Activated CD4-positive, alpha-beta T cell treated with anti-CD3 and anti-CD28 coated beads, Interleukin-2, amount 10 ng/mL, durations not matched to agents 24 days and 14 days (primary cell): ENCODE measurements at regions of chr5 and their contacts with region 1.

Region 1: GRCh38 chr5:160439205-160439600 is 17.5 kb downstream of the PTTG1 start:
- DNase-seq: peak; percentile 97
- H3K4me3 Mint-ChIP-seq: peak overlapping the region; percentile 92
- H3K27ac Mint-ChIP-seq: peak overlapping the region; percentile 99
- H3K4me1 Mint-ChIP-seq: peaks cover 61% of the 10 kb centered on the region
- H3K27me3 Mint-ChIP-seq: no peaks in the 10 kb centered on the region

Region 2: DNA sequence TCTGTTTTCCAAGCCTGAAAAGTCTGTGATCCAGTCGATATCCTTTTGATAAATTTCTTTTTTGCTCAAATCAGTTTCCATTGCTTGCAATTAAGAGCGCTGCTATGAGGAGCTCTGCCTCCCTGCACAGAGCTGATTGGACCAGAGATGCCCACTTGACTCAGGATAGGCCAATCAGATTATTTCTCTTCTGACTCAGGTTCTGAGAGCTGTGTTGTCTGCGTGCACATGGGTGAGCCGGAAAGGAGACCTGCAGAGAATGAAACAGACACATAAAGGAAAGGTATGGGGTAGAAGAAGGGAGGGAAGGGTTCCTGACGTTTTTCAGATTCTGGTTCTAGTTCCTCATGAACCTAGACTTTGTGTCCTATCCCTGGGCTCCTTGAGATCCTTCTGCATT is 225.7 kb before region 1 on chr5:
- intact Hi-C with region 1: no loop called
- DNase-seq: no peak
- H3K4me3 Mint-ChIP-seq: no peak overlapping the region
- H3K27ac Mint-ChIP-seq: no peak overlapping the region
- H3K4me1 Mint-ChIP-seq: no peaks in the 10 kb centered on the region
- H3K27me3 Mint-ChIP-seq: peaks cover 5% of the 10 kb centered on the region

Region 3: GRCh38 chr5:160333721-160334120 is 105.5 kb before region 1 on chr5:
- intact Hi-C with region 1: no loop called
- DNase-seq: no peak
- H3K4me3 Mint-ChIP-seq: no peak overlapping the region
- H3K27ac Mint-ChIP-seq: no peak overlapping the region
- H3K4me1 Mint-ChIP-seq: peaks cover 7% of the 10 kb centered on the region
- H3K27me3 Mint-ChIP-seq: no peaks in the 10 kb centered on the region

Region 4: GRCh38 chr5:160450164-160450932 is 11.1 kb after region 1 on chr5:
- intact Hi-C with region 1: loop called (anchors 1 kb)
- DNase-seq: peak; percentile 40
- H3K4me3 Mint-ChIP-seq: peak overlapping the region; percentile 19
- H3K27ac Mint-ChIP-seq: peak overlapping the region; percentile 37
- H3K4me1 Mint-ChIP-seq: peaks cover 39% of the 10 kb centered on the region
- H3K27me3 Mint-ChIP-seq: no peaks in the 10 kb centered on the region

Region 5: DNA sequence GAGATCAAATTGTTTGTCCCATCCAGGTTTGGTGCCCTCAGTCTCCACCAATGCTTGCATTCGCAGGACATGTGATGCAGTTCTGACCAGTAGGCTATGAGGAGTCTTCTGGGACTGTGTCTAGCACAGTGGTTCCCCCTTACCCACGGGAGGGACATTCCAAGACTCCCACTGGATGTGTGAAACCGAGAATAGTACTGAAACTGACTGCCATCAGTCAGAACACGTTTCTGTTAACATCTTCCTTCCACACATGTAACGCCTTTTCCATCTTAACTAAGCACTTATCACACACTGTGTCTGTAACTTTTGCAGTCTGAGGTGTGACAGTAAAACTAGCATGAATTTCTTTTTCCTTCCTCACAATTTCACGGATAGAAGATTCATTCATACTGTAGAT is 57.1 kb after region 1 on chr5:
- intact Hi-C with region 1: loop called (anchors 2 kb)
- DNase-seq: no peak
- H3K4me3 Mint-ChIP-seq: peak overlapping the region; percentile 18
- H3K27ac Mint-ChIP-seq: peak overlapping the region; percentile 70
- H3K4me1 Mint-ChIP-seq: peaks cover 30% of the 10 kb centered on the region
- H3K27me3 Mint-ChIP-seq: no peaks in the 10 kb centered on the region

Region 6: GRCh38 chr5:160539431-160539830 is 100.2 kb after region 1 on chr5:
- intact Hi-C with region 1: loop called (anchors 1 kb)
- DNase-seq: peak; percentile 64
- H3K4me3 Mint-ChIP-seq: no peak overlapping the region
- H3K27ac Mint-ChIP-seq: no peak overlapping the region
- H3K4me1 Mint-ChIP-seq: peaks cover 9% of the 10 kb centered on the region
- H3K27me3 Mint-ChIP-seq: no peaks in the 10 kb centered on the region

Region 7: DNA sequence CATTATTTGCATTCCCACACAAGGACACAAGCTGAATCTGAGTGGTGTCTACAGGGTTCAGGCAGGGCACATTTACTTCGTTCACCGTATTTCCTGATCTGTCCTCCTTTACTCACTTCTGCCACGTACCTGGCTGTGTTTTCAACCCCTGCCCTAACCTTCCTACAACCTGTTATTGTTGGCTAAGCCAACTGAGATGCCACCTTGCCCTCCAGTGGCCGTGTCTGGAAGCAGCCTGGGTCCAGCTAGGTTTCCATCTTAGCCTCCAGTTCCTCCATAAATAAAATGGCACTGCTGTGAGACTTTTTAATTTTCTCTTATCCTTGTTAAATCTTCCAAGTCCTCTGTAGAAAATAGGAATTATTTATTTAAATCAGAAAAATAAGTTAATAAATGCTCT is 348.0 kb after region 1 on chr5:
- intact Hi-C with region 1: loop called (anchors 5 kb)
- DNase-seq: peak; percentile 63
- H3K4me3 Mint-ChIP-seq: no peak overlapping the region
- H3K27ac Mint-ChIP-seq: no peak overlapping the region
- H3K4me1 Mint-ChIP-seq: no peaks in the 10 kb centered on the region
- H3K27me3 Mint-ChIP-seq: peaks cover 2% of the 10 kb centered on the region